Adrenal gland (tissue), 19 donors: ENCODE measurements at regions of chr13 and their contacts with region 1.

Region 1: GRCh38 chr13:43804461-43805070 is 17.8 kb upstream of the ENOX1 start:
- DNase-seq: peak in 2 of 7 donors; percentile 17 to 19
- H3K4me3 ChIP-seq: no peak overlapping the region
- H3K27ac ChIP-seq: no peak overlapping the region
- H3K4me1 ChIP-seq: peaks cover 0 to 7% of the 10 kb centered on the region in 2 donors
- H3K27me3 ChIP-seq: no peaks in the 10 kb centered on the region
- CTCF ChIP-seq: peak; percentile 43 to 71 (median 53)
- POLR2A ChIP-seq: no peak

Region 2: DNA sequence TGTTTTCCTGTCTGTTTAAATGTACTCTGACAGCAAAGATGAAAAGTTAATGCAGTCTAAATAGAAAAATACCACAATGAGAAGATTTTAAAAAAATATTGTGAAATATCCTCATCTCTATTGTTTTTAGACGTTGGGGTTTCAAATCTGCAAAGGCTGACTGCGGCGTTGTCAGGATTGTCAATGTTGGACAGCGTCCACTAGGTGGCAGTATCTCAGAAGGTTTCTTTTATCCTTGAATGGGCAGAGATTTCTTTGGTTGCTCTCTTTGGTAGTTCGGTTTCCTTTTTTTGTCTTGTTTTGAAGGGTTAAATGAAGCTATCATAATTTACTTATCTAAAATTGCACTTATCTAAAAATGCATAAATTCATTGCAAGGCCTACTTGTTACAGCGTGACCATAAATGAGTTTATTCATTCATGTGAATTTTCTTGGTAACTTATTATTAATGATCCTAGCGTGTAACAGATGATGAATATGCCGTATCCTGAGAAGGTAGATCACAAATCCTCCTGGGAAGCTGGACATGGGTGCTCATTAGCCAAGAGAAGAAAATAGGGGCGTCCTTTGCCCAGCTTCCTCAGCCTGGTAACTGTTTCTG is 1209.5 kb before region 1 on chr13:
- intact Hi-C with region 1: loop called in 1 of 2 experiments (anchors 10 kb)
- DNase-seq: peak; percentile 36 to 78 (median 48)
- H3K4me3 ChIP-seq: no peak overlapping the region
- H3K27ac ChIP-seq: no peak overlapping the region
- H3K4me1 ChIP-seq: peaks cover 0 to 4% of the 10 kb centered on the region in 2 donors
- H3K27me3 ChIP-seq: no peaks in the 10 kb centered on the region
- CTCF ChIP-seq: peak; percentile 63 to 91 (median 78)
- POLR2A ChIP-seq: no peak

Region 3: DNA sequence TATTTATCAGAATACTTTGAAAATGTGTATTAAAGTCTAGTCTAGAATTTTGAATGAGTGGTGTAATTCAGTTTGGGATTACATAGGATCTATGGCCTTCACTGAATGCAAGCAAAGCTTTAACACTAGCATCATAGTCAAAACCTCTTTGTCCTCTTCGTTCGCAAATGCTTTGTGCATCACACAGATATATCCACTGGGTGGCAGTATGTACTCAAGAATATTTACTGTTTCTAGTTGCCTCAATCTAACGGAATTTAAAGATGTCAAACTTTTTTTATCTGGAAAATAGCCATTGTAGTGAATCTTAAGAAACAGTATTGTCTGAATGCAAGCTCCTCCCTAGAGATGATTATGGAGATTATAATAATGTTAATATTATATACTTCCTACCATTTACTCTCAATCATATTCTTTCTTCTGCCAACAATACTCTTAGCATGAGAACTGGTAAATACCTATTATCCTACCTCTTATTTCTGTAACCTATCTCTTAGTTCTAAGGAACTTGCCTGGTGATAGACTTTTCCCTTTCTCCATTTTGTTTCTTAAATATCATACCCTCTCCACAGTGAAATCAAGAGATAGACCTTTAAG is 101.0 kb after region 1 on chr13:
- intact Hi-C with region 1: no loop called
- DNase-seq: peak in 4 of 7 donors; percentile 17 to 43 (median 34)
- H3K4me3 ChIP-seq: no peak overlapping the region
- H3K27ac ChIP-seq: no peak overlapping the region
- H3K4me1 ChIP-seq: peaks cover 0 to 5% of the 10 kb centered on the region in 2 donors
- H3K27me3 ChIP-seq: no peaks in the 10 kb centered on the region
- CTCF ChIP-seq: peak; percentile 53 to 91 (median 86)
- POLR2A ChIP-seq: no peak